A549 (cell line): ENCODE measurements at regions of chr6 and their contacts with region 1.

Region 1: GRCh38 chr6:47780510-47781356 is 1.1 kb upstream of the OPN5 start:
- DNase-seq: peak; percentile 33 to 57
- ATAC-seq: peak; percentile 85 to 89
- H3K4me3 ChIP-seq: no peak overlapping the region
- H3K27ac ChIP-seq: peak overlapping the region; percentile 41 to 48; a peak in 3 of 6 replicates
- H3K4me1 ChIP-seq: no peaks in the 10 kb centered on the region
- CTCF ChIP-seq: peak; percentile 67
- EP300 ChIP-seq: no peak
- POLR2A ChIP-seq: no peak
- RAD21 ChIP-seq: peak; percentile 76 to 80

Region 2: GRCh38 chr6:47729019-47729418 is 51.7 kb before region 1 on chr6:
- CTCF ChIA-PET with region 1: interaction called, 10 read pairs
- POLR2A ChIA-PET with region 1: no interaction called
- DNase-seq: no peak
- ATAC-seq: peak; percentile 76 to 83
- H3K4me3 ChIP-seq: no peak overlapping the region
- H3K27ac ChIP-seq: peak overlapping the region; percentile 25 to 46; a peak in 3 of 6 replicates
- H3K4me1 ChIP-seq: peaks cover 10% of the 10 kb centered on the region
- CTCF ChIP-seq: no peak
- EP300 ChIP-seq: no peak
- POLR2A ChIP-seq: no peak
- RAD21 ChIP-seq: no peak